Activated CD4-positive, alpha-beta memory T cell treated with anti-CD3 and anti-CD28 coated beads for 36 hours (primary cell): ENCODE measurements at regions of chr2 and their contacts with region 1.

Region 1: DNA sequence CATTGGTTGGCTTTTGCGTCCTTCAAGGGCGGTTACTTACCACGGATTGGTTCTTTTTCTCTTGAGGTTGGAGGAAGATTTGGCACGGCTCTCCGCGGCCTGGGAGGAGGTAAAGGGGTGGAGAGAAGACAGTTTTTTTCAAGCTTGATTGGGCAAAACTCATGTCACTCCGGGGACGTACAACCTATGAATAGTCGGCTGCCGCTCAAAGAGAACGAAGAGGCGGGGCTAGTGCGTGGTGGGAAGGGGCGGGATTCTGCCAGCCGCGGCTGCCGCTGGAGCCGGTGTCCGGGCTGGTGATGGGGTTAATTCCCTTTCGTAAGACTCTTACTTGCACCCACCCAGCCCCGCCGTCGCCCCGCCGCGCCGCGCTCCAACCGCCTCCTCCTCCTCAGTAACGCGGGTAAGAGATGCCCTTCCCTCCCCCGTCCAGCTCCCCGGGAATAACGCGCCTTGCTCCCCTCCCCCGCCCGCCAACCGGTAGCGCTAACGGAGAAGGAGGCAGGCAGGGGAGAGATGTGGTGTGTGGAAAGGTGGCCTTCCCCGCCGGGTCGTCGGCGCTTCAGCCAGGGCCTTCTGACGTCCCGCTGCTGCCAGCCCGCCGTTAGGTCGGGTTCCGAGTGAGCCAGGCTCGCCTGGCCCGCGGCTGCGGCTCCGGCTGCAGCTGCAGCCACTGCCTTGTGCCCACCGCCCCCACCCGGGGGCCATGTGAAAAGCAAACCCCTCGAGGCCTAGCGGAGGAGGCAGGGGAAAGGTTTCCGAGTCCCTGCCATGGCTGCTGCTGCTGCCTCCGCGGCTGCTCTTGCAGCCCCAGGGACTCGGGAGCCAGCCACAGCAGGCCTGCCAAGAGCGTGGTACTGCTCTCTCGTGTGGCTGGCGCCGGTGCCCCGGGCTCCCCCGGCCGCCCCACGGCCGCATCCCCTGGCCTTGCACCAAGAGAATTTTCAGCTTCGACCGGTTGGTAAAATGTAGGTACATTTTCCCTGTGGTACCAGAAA is at the start of gene R3HDM1:
- DNase-seq: peak; percentile 97
- H3K4me3 Mint-ChIP-seq: no peak within 1 kb of the TSS
- H3K27ac Mint-ChIP-seq: peak within 1 kb of the TSS; percentile 71
- H3K4me1 Mint-ChIP-seq: peaks cover 29% of the 10 kb centered on the region
- H3K27me3 Mint-ChIP-seq: no peaks in the 10 kb centered on the region
- total RNA-seq, gene R3HDM1: 49.3 to 56.3 TPM

Region 2: DNA sequence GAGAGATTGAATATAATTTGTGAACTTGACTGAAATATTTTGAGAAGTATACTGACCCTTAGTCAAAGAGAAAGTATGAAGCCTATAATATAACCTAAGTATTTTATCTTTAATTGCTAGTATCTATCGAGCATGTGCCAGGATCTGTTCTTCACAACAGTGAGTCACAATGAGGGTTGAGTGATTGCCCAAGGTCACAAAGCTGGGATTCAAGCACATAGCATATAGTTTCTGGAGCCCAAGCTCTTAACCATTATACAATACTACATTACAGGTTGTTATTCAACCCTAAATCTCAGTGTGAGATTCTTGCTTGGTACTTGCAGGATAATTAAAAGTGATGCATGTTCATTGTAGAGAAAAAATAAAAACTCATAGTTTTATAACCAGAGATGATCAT is 382.3 kb before region 1 on chr2:
- CTCF ChIA-PET with region 1: no interaction called
- POLR2A ChIA-PET with region 1: no interaction called
- intact Hi-C with region 1: no loop called
- DNase-seq: no peak
- H3K4me3 Mint-ChIP-seq: no peak overlapping the region
- H3K27ac Mint-ChIP-seq: no peak overlapping the region
- H3K4me1 Mint-ChIP-seq: peaks cover 11% of the 10 kb centered on the region
- H3K27me3 Mint-ChIP-seq: no peaks in the 10 kb centered on the region

Region 3: DNA sequence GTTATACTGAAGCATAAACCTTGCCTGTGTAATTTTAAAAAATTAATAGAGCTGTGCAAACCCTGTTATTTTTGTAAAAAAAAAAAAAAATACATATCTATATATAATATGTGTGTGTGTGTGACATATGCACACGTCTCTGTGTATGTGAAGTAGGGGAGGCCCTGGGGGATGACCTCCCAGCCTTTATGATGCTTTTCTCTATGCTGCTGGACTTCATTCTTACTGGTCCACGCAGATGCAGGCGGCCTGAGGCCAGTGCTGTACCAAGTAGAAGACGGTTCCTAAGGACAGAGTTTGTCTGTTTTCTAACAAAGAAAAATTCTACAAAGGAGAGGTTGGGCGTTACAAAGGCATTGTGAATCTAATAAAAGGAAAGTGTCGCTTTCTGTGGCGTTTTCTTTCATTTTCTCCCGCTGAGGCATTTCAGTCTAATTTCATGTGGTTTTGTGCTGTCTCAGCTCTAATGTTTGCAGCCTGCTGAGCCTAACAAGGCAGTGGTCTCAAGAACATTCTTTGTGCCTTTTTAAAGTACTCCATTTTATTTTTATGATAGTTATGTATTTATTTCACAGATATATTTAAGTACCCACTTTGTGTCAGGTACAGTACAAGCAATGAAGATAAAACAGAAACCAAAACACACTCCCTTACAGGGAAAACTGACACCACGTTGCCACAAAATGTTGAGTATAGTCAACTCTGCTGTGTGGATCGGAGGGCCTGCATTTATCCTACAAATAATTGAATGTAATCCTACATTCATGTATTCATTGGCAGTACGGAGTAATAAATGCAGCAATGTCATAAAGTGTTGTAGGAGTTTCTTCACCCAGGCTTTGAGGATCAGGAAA is 361.4 kb before region 1 on chr2:
- CTCF ChIA-PET with region 1: no interaction called
- POLR2A ChIA-PET with region 1: no interaction called
- intact Hi-C with region 1: loop called (anchors 10 kb)
- DNase-seq: no peak
- H3K4me3 Mint-ChIP-seq: no peak overlapping the region
- H3K27ac Mint-ChIP-seq: peak overlapping the region; percentile 29
- H3K4me1 Mint-ChIP-seq: peaks cover 7% of the 10 kb centered on the region
- H3K27me3 Mint-ChIP-seq: no peaks in the 10 kb centered on the region

Region 4: DNA sequence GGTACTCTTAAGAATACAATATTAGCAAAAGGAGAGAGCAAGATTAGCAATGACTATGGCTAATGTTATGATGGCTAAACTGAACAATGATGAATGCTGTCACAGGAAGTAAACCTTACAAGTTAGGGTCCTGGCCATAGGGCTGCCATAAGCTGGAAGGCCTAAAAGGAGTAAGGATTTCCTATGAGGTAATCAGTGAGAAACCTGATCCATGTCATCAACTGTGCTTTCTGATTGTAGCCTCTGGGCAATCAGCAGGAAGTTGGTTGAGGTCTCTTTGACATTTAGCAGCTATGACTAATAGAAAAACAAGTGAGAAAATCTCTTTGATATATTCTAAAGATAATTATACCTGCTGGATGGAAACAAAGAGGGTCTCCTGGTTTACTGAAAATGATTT is 286.5 kb before region 1 on chr2:
- CTCF ChIA-PET with region 1: no interaction called
- POLR2A ChIA-PET with region 1: no interaction called
- intact Hi-C with region 1: loop called (anchors 1 kb)
- DNase-seq: peak; percentile 20
- H3K4me3 Mint-ChIP-seq: no peak overlapping the region
- H3K27ac Mint-ChIP-seq: no peak overlapping the region
- H3K4me1 Mint-ChIP-seq: peaks cover 4% of the 10 kb centered on the region
- H3K27me3 Mint-ChIP-seq: no peaks in the 10 kb centered on the region

Region 5: DNA sequence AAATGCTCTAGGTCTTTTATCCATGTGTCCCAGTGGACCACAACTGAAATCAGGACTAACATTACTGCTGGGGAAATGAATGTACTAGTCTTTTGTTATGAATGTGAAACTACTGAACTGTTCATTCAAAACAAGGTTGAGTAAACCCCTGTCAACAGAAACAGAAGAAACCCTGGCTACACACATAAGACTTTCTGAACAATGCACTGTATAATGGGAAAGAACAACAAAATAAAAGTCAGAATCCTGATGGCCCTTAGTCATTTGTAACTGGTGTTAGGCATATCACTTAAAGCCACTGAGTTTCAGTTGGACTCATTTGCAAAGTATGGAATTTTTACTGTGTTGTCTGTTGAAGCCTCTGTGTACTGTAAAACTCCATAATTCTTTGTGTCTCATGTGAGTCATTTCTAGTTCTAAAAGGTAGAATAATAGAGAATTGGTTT is 133.1 kb after region 1 on chr2:
- CTCF ChIA-PET with region 1: no interaction called
- POLR2A ChIA-PET with region 1: no interaction called
- intact Hi-C with region 1: loop called (anchors 5 kb)
- DNase-seq: no peak
- H3K4me3 Mint-ChIP-seq: no peak overlapping the region
- H3K27ac Mint-ChIP-seq: peak overlapping the region; percentile 14
- H3K4me1 Mint-ChIP-seq: peaks cover 20% of the 10 kb centered on the region
- H3K27me3 Mint-ChIP-seq: no peaks in the 10 kb centered on the region

Region 6: DNA sequence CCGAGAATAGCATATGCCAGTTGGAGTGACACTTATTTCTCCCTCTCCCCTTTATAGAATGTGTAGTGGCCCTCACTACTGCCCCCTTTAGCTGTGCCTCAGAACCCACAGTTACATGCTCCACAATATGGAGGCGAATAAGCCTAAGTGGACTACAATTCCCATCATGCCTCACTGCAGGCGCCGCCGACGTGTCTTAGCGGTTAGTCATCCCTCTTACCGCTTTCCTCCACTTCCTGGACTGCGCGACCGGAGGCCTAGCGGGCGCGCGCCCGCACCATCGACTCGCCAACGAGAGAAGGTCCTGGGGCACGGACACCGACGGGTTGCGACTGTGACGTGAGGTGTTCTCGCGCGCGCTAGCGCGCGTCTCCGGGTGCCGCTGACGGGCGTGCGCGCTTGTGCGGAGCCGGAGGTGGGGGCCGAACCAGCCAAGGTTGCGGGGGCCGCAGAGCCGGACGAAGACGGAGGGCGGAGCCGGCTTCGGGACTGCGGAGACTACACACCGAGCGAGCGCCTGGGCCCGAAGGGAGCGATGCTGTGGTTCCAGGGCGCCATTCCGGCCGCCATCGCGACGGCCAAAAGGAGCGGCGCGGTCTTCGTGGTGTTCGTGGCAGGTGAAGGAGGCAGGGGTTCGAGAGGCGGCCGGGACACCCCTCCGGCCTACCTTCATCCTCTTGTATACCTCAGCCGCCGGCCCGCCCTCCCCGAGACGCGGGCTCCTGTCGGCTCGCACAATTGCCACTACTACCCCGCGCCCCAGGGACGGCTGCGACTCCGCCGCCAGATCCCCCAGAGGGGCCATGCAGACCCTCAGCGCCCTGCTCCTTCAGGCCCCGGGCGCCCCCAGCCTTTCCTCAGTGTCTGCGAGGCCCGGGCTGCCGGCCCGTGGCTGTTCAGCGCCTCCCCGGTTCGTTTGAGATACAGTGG is 210.1 kb after region 1 on chr2 and contains the start of gene UBXN4:
- CTCF ChIA-PET with region 1: no interaction called
- POLR2A ChIA-PET with region 1: no interaction called
- intact Hi-C with region 1: loop called (anchors 1 kb)
- DNase-seq: peak; percentile 98
- H3K4me3 Mint-ChIP-seq: peak within 1 kb of the TSS; percentile 96
- H3K27ac Mint-ChIP-seq: peak within 1 kb of the TSS; percentile 99
- H3K4me1 Mint-ChIP-seq: peaks cover 24% of the 10 kb centered on the region
- H3K27me3 Mint-ChIP-seq: no peaks in the 10 kb centered on the region
- total RNA-seq, gene UBXN4: 107 TPM

Region 7: GRCh38 chr2:135820003-135820618 is 288.6 kb after region 1 on chr2:
- CTCF ChIA-PET with region 1: no interaction called
- POLR2A ChIA-PET with region 1: no interaction called
- intact Hi-C with region 1: no loop called
- DNase-seq: peak; percentile 94
- H3K4me3 Mint-ChIP-seq: peak overlapping the region; percentile 61
- H3K27ac Mint-ChIP-seq: peak overlapping the region; percentile 78
- H3K4me1 Mint-ChIP-seq: peaks cover 38% of the 10 kb centered on the region
- H3K27me3 Mint-ChIP-seq: no peaks in the 10 kb centered on the region

Region 8: DNA sequence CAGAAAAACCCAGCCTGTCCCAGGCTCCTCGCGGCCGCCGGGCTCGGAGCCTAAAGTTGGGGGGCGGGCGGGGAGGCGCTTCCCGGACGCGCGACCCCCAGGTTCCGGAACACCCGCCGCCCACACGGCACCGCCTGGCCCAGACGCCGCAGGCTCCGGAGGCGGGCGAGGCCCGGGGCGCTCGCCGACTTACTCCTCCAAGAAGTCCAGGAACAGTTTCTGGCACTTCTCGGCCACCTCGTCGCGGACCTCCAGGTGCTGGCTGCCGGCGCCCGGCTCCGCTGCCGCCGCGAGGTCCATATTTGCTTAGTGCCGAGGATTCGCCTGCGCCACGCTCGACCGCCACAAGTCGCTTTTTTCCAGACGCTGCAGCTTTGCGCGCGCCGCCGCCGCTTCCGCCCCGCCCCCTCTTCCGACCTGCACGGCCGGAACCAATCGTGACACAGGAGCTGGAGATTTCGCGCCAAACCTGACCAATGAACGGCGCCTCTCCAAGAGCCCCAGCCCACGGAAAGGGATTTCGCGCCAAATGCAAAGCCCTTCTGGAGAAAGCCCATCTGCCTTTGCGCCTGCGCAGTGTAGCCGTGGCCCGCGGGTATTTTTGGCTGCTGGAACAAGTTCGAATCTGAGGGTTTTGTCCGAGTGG is 344.7 kb after region 1 on chr2 and contains the start of gene MCM6:
- CTCF ChIA-PET with region 1: no interaction called
- POLR2A ChIA-PET with region 1: interaction called, 3 read pairs
- intact Hi-C with region 1: loop called (anchors 1 kb)
- DNase-seq: peak; percentile 100
- H3K4me3 Mint-ChIP-seq: peak within 1 kb of the TSS; percentile 90
- H3K27ac Mint-ChIP-seq: peak within 1 kb of the TSS; percentile 98
- H3K4me1 Mint-ChIP-seq: peaks cover 39% of the 10 kb centered on the region
- H3K27me3 Mint-ChIP-seq: peaks cover 2% of the 10 kb centered on the region
- total RNA-seq, gene MCM6: 280 to 284 TPM